CD8-positive, alpha-beta T cell (primary cell): ENCODE measurements at regions of chr3 and their contacts with region 1.

Region 1: GRCh38 chr3:28328188-28329151 is 20.1 kb upstream of the ZCWPW2 start:
- DNase-seq: peak in 2 of 9 experiments; percentile 62 to 72
- ATAC-seq: peak; percentile 32
- H3K4me3 ChIP-seq: no peak overlapping the region
- H3K4me3 Mint-ChIP-seq: no peak overlapping the region
- H3K27ac ChIP-seq: peak overlapping the region in 1 of 2 experiments; percentile 21
- H3K27ac Mint-ChIP-seq: peak overlapping the region; percentile 72
- H3K4me1 ChIP-seq: peaks cover 13% of the 10 kb centered on the region
- H3K4me1 Mint-ChIP-seq: peaks cover 31% of the 10 kb centered on the region
- H3K27me3 ChIP-seq: no peaks in the 10 kb centered on the region
- H3K27me3 Mint-ChIP-seq: no peaks in the 10 kb centered on the region
- CTCF ChIP-seq: peak; percentile 83

Region 2: GRCh38 chr3:27312044-27312668 is 1016.3 kb before region 1 on chr3:
- CTCF ChIA-PET with region 1: no interaction called
- POLR2A ChIA-PET with region 1: no interaction called
- intact Hi-C with region 1: loop called (anchors 1 to 2 kb)
- DNase-seq: peak in 2 of 9 experiments; percentile 65 to 68
- ATAC-seq: peak; percentile 73
- H3K4me3 ChIP-seq: no peak overlapping the region
- H3K4me3 Mint-ChIP-seq: no peak overlapping the region
- H3K27ac ChIP-seq: no peak overlapping the region
- H3K27ac Mint-ChIP-seq: no peak overlapping the region
- H3K4me1 ChIP-seq: no peaks in the 10 kb centered on the region
- H3K4me1 Mint-ChIP-seq: peaks cover 2% of the 10 kb centered on the region
- H3K27me3 ChIP-seq: no peaks in the 10 kb centered on the region
- H3K27me3 Mint-ChIP-seq: peaks cover 2% of the 10 kb centered on the region
- CTCF ChIP-seq: peak; percentile 68

Region 3: GRCh38 chr3:28099296-28099695 is 229.2 kb before region 1 on chr3:
- CTCF ChIA-PET with region 1: no interaction called
- POLR2A ChIA-PET with region 1: no interaction called
- intact Hi-C with region 1: loop called in 1 of 2 experiments (anchors 10 kb)
- DNase-seq: no peak
- ATAC-seq: no peak
- H3K4me3 ChIP-seq: no peak overlapping the region
- H3K4me3 Mint-ChIP-seq: no peak overlapping the region
- H3K27ac ChIP-seq: no peak overlapping the region
- H3K27ac Mint-ChIP-seq: no peak overlapping the region
- H3K4me1 ChIP-seq: no peaks in the 10 kb centered on the region
- H3K4me1 Mint-ChIP-seq: peaks cover 7% of the 10 kb centered on the region
- H3K27me3 ChIP-seq: no peaks in the 10 kb centered on the region
- H3K27me3 Mint-ChIP-seq: no peaks in the 10 kb centered on the region
- CTCF ChIP-seq: no peak

Region 4: DNA sequence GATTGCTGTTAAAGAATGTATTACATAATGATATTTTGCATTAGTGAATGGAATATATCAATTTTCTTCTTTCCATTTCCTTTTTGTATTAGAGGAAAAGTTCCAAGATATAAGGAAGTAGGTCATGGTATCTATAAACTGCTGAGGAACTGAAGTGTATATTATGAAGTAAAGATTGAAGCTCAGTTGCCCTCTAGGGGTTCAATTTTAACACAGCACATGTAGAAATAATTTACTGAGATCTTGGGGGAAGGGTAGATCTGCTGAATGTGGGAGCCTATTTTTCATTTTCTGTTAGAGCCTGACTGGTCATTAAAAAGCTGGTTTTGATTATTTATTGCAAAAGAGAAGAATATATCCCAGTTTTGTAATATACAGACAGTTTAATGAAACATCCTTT is 41.9 kb before region 1 on chr3:
- CTCF ChIA-PET with region 1: interaction called, 11 read pairs
- POLR2A ChIA-PET with region 1: no interaction called
- intact Hi-C with region 1: loop called in 1 of 2 experiments (anchors 5 kb)
- DNase-seq: peak in 2 of 9 experiments; percentile 60 to 71
- ATAC-seq: peak; percentile 83
- H3K4me3 ChIP-seq: peak overlapping the region in 1 of 2 experiments; percentile 21
- H3K4me3 Mint-ChIP-seq: no peak overlapping the region
- H3K27ac ChIP-seq: peak overlapping the region in 1 of 2 experiments; percentile 36
- H3K27ac Mint-ChIP-seq: no peak overlapping the region
- H3K4me1 ChIP-seq: no peaks in the 10 kb centered on the region
- H3K4me1 Mint-ChIP-seq: peaks cover 34% of the 10 kb centered on the region
- H3K27me3 ChIP-seq: no peaks in the 10 kb centered on the region
- H3K27me3 Mint-ChIP-seq: no peaks in the 10 kb centered on the region
- CTCF ChIP-seq: peak; percentile 60

Region 5: GRCh38 chr3:28348629-28349483 is 20.4 kb after region 1 on chr3 and contains the starts of genes AZI2 and ZCWPW2:
- CTCF ChIA-PET with region 1: interaction called, 15 read pairs
- POLR2A ChIA-PET with region 1: interaction called, 17 read pairs
- intact Hi-C with region 1: loop called in 1 of 2 experiments (anchors 1 kb)
- DNase-seq: peak; percentile 84 to 96 (median 91)
- ATAC-seq: peak; percentile 89
- H3K4me3 ChIP-seq: peak within 1 kb of the TSS; percentile 96 to 97
- H3K4me3 Mint-ChIP-seq: peak within 1 kb of the TSS; percentile 98
- H3K27ac ChIP-seq: peak within 1 kb of the TSS; percentile 95 to 99
- H3K27ac Mint-ChIP-seq: peak within 1 kb of the TSS; percentile 95
- H3K4me1 ChIP-seq: peaks cover 35% of the 10 kb centered on the region
- H3K4me1 Mint-ChIP-seq: peaks cover 60% of the 10 kb centered on the region
- H3K27me3 ChIP-seq: no peaks in the 10 kb centered on the region
- H3K27me3 Mint-ChIP-seq: no peaks in the 10 kb centered on the region
- CTCF ChIP-seq: no peak
- total RNA-seq, gene AZI2: 27.2 to 29.2 TPM
- total RNA-seq, gene ZCWPW2: 0.54 TPM in 1 of 2 experiments, not detected in the other